AG04449 (cell line): ENCODE measurements at regions of chr14 and their contacts with region 1.

Region 1: GRCh38 chr14:72516936-72517700 is 376.8 kb downstream of the DPF3 start:
- DNase-seq: peak; percentile 56
- H3K4me3 ChIP-seq: 0 out of 2 replicates have a peak overlapping the region, but pooled peaks have one; percentile 9
- CTCF ChIP-seq: peak; percentile 84

Region 2: DNA sequence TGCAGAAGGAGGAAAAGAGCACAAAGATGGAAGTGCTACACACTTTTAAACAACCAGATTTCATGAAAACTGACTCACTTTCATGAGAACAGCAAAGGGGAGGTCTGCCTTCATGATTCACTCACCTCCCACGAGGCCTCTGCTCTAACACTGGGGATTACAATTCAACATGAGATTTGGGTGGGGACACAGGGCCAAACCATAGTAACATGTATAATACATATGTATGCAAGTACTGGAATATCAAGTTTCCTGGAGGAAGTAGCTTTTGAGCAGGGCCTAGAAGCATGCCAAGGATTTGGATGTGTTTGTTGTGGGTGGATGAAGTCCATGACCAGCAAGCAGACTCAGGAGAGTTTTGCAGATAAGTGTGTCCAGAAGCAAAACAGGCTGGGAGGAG is 175.9 kb before region 1 on chr14:
- CTCF ChIA-PET with region 1: no interaction called
- POLR2A ChIA-PET with region 1: no interaction called
- DNase-seq: no peak
- H3K4me3 ChIP-seq: no peak overlapping the region
- CTCF ChIP-seq: no peak

Region 3: GRCh38 chr14:72678356-72678755 is 161.2 kb after region 1 on chr14:
- CTCF ChIA-PET with region 1: interaction called, 10 read pairs
- POLR2A ChIA-PET with region 1: no interaction called
- DNase-seq: no peak
- H3K4me3 ChIP-seq: no peak overlapping the region
- CTCF ChIP-seq: no peak

Region 4: DNA sequence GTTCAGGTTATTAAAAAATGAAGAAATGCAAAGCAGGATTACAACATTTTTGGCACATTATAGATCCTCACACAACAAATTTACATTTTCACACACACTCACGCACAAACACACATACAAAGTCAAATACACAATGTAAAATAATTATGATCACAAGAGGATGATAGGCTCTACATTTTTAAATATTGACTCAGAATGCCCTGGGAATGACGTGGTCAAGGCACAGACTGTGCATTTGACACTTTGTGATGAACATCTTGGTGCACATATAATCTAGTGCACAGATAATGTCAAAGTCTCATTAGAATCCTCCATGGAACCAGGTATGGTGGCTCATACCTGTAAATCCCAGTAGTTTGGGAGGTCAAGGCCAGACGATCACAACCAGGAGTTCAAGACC is 327.4 kb after region 1 on chr14:
- CTCF ChIA-PET with region 1: interaction called, 11 read pairs
- POLR2A ChIA-PET with region 1: no interaction called
- DNase-seq: no peak
- H3K4me3 ChIP-seq: no peak overlapping the region
- CTCF ChIP-seq: no peak

Region 5: DNA sequence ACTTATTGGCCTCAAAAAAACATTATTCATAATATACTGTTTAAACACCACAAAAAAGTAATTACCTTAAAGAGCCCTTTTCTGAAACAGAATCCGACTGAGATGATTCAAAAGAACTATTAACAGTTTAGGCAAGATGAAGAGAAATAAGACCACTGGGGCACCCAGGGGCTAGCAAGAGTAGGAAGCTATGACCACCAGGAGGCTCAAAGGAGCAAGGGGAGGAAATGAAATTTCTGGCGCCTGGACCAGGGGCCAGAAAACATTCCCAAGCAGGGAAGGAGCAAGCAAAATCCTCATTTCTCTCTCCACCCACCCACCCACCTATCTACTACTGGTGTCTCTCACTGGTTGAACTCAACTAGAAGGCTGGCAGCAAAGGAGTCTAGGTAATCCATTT is 402.9 kb after region 1 on chr14:
- CTCF ChIA-PET with region 1: interaction called, 10 read pairs
- POLR2A ChIA-PET with region 1: no interaction called
- DNase-seq: no peak
- H3K4me3 ChIP-seq: no peak overlapping the region
- CTCF ChIP-seq: no peak

Region 6: GRCh38 chr14:72942782-72943333 is 425.7 kb after region 1 on chr14:
- CTCF ChIA-PET with region 1: interaction called, 782 read pairs
- POLR2A ChIA-PET with region 1: no interaction called
- DNase-seq: no peak
- H3K4me3 ChIP-seq: no peak overlapping the region
- CTCF ChIP-seq: no peak

Region 7: DNA sequence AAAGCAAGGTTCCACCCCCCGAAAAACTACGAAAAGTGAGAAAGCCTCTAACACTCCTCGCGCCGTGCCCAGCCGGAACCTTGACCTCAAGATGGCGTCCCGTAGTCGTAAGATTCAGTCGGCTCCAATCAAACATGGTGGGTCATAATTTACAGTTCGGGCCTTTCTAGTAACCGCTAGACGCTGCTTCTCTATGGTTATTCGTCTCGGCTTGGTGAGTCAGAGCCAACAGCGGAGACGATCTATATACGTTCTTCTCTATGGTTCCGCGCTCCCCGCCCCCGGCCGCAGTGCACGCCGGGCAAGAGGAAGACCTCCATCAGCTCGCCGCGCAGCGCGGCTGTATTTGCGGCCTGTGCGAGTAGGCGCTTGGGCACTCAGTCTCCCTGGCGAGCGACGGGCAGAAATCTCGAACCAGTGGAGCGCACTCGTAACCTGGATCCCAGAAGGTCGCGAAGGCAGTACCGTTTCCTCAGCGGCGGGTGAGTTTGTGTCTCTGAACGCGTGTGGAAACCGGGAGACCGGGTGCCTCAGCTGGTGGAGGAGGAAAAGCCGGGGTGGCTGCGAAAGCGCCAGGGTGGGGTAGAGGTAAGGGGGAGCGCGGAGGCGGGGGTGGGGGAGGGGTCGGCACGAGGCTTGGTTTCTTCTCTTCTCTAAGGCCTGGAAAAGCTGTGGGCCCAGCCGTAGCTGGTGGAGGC is 541.3 kb after region 1 on chr14 and contains the start of gene RBM25:
- CTCF ChIA-PET with region 1: interaction called, 13 read pairs
- POLR2A ChIA-PET with region 1: interaction called, 3 read pairs
- DNase-seq: peak; percentile 96
- H3K4me3 ChIP-seq: peak within 1 kb of the TSS; percentile 95
- CTCF ChIP-seq: no peak